ENCODE measurements at regions of chr11 and their contacts with region 1.

Region 1: DNA sequence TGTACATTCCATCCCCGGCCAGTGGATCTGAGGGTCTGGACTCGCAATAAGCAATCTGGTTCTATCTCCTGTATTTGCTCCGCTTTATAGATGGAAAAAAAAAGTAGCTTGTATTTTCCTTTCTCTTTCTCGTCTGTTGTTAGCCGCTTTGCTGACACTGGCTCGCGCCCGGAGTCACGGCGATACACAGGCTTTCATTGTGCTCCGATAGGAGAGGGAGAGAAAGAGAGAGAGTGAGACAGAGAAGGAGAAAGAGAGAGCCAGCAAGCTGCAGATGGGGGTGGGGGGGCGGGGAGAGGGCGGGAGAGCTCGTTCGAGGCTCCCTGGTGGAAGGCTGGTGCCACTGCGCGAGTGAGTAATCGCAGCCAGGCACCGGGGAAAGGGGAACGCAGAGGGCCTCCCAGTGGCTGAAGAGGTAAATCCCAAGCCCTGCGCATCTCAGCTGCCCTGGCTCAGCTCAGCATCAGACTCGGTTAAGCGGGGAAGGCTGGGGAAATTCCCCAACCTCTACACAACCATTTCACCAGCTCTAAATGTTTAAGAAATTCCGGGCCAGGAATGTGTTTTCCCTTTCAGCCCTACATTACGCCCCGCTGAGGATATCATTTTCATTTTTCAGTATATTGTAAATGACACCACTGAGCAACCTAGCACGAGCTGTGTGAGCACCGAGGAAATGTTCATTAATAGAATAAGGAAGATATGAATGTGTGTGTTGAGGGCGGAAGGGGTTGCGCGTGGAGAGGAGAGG is at the start of gene MAML2:
- DNase-seq: peak; percentile 90 to 93 (median 91)
- H3K4me3 ChIP-seq: peak within 1 kb of the TSS; percentile 62
- H3K27ac ChIP-seq: peak within 1 kb of the TSS in 1 of 2 donors; percentile 69
- H3K4me1 ChIP-seq: peaks cover 23% of the 10 kb centered on the region
- H3K27me3 ChIP-seq: no peaks in the 10 kb centered on the region
- CTCF ChIP-seq: peak; percentile 82 to 97 (median 87)
- EP300 ChIP-seq: no peak
- POLR2A ChIP-seq: no peak
- total RNA-seq, gene MAML2: 10.7 to 17.5 (median 14.6) TPM

Region 2: GRCh38 chr11:95835768-95836488 is 507.2 kb before region 1 on chr11:
- intact Hi-C with region 1: loop called in 2 of 4 experiments (anchors 5 to 10 kb)
- DNase-seq: peak; percentile 45 to 73 (median 55)
- H3K4me3 ChIP-seq: no peak overlapping the region
- H3K27ac ChIP-seq: peak overlapping the region in 1 of 2 donors; percentile 40
- H3K4me1 ChIP-seq: no peaks in the 10 kb centered on the region
- H3K27me3 ChIP-seq: no peaks in the 10 kb centered on the region
- CTCF ChIP-seq: peak; percentile 68 to 83 (median 78)
- EP300 ChIP-seq: no peak
- POLR2A ChIP-seq: no peak

Region 3: GRCh38 chr11:96001037-96001436 is 342.1 kb before region 1 on chr11:
- intact Hi-C with region 1: loop called in 1 of 4 experiments (anchors 5 kb)
- DNase-seq: peak; percentile 86 to 96 (median 91)
- H3K4me3 ChIP-seq: no peak overlapping the region
- H3K27ac ChIP-seq: peak overlapping the region; percentile 55 to 70
- H3K4me1 ChIP-seq: peaks cover 6% of the 10 kb centered on the region
- H3K27me3 ChIP-seq: no peaks in the 10 kb centered on the region
- CTCF ChIP-seq: peak in 2 of 3 donors; percentile 22 to 23
- EP300 ChIP-seq: no peak
- POLR2A ChIP-seq: no peak

Region 4: GRCh38 chr11:96054870-96055705 is 288.0 kb before region 1 on chr11:
- intact Hi-C with region 1: loop called (anchors 5 kb)
- DNase-seq: no peak
- H3K4me3 ChIP-seq: no peak overlapping the region
- H3K27ac ChIP-seq: no peak overlapping the region
- H3K4me1 ChIP-seq: peaks cover 14% of the 10 kb centered on the region
- H3K27me3 ChIP-seq: no peaks in the 10 kb centered on the region
- CTCF ChIP-seq: peak; percentile 28 to 66 (median 47)
- EP300 ChIP-seq: no peak
- POLR2A ChIP-seq: no peak

Region 5: DNA sequence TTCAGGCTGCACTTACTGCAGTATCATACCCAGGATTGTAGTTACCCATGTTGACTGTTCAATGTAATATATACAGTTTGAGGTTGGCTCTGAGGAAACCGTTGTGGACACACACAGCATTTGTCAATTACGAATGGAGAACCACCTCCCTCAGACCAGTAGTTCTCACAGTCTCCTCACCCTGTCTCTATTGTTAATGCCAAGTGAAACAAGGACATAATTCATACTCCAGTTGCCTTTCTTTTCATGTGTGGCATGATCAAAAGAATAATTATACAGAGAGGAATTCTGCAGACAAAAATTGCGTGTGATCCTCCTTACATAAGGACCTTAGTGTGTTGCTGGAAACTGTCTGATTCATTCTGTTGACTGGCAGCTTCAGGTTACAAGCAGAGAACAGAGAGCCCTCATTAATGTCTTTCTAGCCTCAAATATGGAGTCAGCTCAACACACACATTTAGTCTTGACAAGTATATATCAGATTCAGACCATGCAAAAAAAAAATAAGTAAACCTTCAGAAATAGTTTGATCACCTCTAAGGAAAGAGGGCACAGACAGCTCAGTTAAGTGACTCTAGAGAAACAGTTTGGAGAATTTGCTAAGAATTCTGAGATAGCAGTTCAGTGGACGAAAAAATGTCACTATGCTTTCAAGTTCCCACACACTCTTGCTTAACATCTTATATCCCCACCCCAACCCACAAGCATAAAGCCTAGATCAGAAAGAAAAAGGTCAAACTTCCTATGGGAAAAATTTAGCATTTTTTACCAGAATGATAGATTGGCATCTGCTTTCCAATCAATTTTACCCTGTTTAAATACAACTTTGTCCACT is 96.2 kb before region 1 on chr11:
- intact Hi-C with region 1: loop called in 1 of 4 experiments (anchors 5 kb)
- DNase-seq: no peak
- H3K4me3 ChIP-seq: no peak overlapping the region
- H3K27ac ChIP-seq: no peak overlapping the region
- H3K4me1 ChIP-seq: no peaks in the 10 kb centered on the region
- H3K27me3 ChIP-seq: no peaks in the 10 kb centered on the region
- CTCF ChIP-seq: no peak
- EP300 ChIP-seq: no peak
- POLR2A ChIP-seq: no peak